HepG2 (cell line): ENCODE measurements at regions of chr10 and their contacts with region 1.

Region 1: DNA sequence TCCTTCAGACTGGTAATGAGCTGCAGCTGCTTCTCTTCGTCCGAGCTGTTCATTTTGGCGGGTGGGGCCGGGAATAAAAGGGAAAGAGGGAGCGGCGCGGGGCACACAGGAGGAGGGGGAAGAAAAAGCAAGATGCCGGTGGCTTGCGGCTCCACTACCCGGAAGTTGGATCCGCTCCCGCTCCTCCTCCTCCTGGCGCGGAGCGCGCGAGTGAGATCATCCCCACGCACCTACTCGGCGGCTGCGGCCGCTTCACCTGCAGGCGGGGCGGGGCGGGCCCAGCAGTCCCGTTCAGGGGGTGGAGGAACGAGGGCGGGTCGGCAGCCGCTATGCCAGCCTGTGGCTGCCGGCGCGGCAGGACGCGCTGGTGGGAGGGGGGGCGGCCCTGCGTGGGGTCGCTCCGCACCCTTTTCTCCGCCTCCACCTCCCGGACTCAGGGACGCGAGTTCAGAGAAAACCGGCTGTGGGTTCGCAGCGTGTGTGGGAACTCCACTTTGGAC is at the start of gene SHTN1:
- DNase-seq: peak; percentile 70
- ATAC-seq: peak; percentile 89
- H3K4me3 ChIP-seq: peak within 1 kb of the TSS; percentile 78 to 86 (median 82)
- H3K27ac ChIP-seq: peak within 1 kb of the TSS; percentile 83
- H3K4me1 ChIP-seq: peaks cover 52% of the 10 kb centered on the region
- H3K27me3 ChIP-seq: no peaks in the 10 kb centered on the region
- CTCF ChIP-seq: no peak
- EP300 ChIP-seq: no peak
- POLR2A ChIP-seq: peak; percentile 57 to 70
- RAD21 ChIP-seq: no peak
- total RNA-seq, gene SHTN1: 15.6 and 18.5 TPM in 2 replicates

Region 2: DNA sequence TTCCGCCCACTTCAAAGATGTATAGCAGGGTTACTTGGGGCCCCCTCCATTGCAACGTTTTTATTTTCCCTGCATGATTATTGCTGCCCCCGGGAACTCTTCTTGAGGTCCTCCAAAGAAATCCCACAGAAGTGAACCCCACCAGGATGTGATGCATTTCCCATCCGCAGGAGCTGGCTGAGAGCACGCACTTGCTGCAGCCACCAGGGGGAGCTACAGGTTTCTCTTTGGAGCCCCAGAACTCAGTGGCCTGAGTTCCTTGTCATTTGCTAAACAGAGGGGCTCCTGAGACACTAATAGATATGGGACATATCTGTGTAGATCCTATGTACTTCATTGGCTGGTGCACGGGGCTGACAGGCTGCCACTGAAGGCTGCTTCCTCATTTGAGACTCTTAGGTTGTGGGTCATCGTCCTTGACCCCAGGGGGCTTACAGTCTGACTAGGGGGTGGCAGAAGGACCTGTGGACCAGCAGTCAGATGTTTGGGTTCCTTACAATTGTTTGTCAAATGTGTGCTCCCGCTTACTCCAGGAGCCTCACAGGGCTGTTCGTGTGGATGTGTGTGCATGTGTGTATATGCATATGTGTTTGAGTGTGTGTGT is 208.1 kb before region 1 on chr10:
- CTCF ChIA-PET with region 1: no interaction called
- POLR2A ChIA-PET with region 1: no interaction called
- in situ Hi-C with region 1: no loop called
- intact Hi-C with region 1: no loop called
- DNase-seq: peak; percentile 60
- ATAC-seq: peak; percentile 96
- H3K4me3 ChIP-seq: no peak overlapping the region
- H3K27ac ChIP-seq: no peak overlapping the region
- H3K4me1 ChIP-seq: no peaks in the 10 kb centered on the region
- H3K27me3 ChIP-seq: peaks cover 0 to 1% of the 10 kb centered on the region in 2 experiments; a peak in 2 of 5 replicates
- CTCF ChIP-seq: peak; percentile 88
- EP300 ChIP-seq: no peak
- POLR2A ChIP-seq: no peak
- RAD21 ChIP-seq: peak; percentile 82

Region 3: GRCh38 chr10:116947842-116948529 is 57.1 kb before region 1 on chr10:
- CTCF ChIA-PET with region 1: no interaction called
- POLR2A ChIA-PET with region 1: interaction called, 5 read pairs
- in situ Hi-C with region 1: no loop called
- intact Hi-C with region 1: loop called (anchors 5 kb)
- DNase-seq: peak; percentile 54
- ATAC-seq: peak; percentile 54; the same call in 2 of the 3 replicates
- H3K4me3 ChIP-seq: no peak overlapping the region
- H3K27ac ChIP-seq: no peak overlapping the region
- H3K4me1 ChIP-seq: peaks cover 18% of the 10 kb centered on the region
- H3K27me3 ChIP-seq: no peaks in the 10 kb centered on the region
- CTCF ChIP-seq: no peak
- EP300 ChIP-seq: no peak
- POLR2A ChIP-seq: no peak
- RAD21 ChIP-seq: no peak

Region 4: DNA sequence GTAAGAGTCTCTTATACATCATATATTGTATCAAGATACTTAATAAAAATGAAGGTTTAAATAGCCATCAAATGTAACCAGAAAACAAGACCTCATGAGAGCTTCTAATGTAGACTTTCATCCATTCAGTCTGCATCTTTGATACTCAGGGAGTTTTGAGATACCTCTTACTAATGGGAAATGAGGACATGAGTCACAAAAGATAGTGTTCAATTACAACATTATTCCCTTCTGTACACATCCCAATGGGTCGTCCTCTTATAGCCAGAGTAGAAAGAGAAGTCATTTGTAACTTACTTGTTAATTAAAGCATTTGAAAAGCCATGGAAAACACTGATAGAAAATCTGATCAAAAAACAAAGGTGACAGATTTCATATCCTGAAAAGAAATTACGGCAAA is 19.5 kb before region 1 on chr10:
- CTCF ChIA-PET with region 1: no interaction called
- POLR2A ChIA-PET with region 1: interaction called, 3 read pairs
- in situ Hi-C with region 1: no loop called
- intact Hi-C with region 1: loop called (anchors 2 kb)
- DNase-seq: no peak
- ATAC-seq: no peak
- H3K4me3 ChIP-seq: no peak overlapping the region
- H3K27ac ChIP-seq: no peak overlapping the region
- H3K4me1 ChIP-seq: peaks cover 47% of the 10 kb centered on the region
- H3K27me3 ChIP-seq: no peaks in the 10 kb centered on the region
- CTCF ChIP-seq: no peak
- EP300 ChIP-seq: no peak
- POLR2A ChIP-seq: no peak
- RAD21 ChIP-seq: no peak

Region 5: DNA sequence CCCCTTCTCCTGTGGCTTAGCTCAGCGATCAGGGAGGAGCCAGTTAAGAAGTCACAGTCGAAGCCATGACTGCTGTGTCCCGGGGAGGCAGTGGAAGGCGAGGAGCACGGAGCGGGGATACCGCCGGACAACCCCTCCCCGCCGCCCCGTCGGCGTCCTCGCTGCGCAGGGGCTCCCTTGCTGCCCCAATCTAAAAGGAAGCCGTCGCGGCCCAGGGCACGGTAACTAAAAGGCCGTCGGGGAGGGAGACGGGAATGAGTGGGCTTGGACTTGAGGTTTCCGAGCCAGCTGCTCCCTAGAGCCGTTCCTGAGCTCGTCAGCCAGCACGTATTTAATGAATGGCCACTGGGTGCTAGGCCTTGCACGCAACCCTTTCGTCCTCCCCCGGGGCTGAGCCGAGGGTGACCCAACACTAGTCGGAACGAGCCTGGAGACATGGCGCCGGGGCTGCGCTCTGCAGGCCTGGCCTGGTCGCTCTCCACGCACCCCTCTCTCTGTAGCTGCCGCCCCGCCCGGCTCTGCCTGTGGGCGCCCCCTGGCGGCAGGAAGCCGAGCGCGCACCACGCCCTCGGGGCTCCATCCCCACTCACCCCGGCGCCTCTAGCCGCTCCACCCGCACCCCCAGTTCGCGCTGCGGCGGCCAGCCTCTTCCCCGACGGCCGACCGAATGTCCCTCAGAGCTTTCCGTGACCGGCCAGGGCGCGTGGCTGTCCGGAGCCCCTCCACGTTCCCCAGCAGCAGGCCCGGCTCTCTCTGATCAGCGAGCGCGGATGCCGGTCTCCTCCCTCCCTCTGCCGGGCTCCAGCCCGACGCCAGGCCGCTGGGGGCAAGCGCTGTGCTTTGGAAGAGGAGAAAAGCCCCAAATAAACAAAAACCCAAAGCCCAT is 163.0 kb after region 1 on chr10:
- CTCF ChIA-PET with region 1: no interaction called
- POLR2A ChIA-PET with region 1: no interaction called
- in situ Hi-C with region 1: loop called (anchors 10 kb)
- intact Hi-C with region 1: loop called (anchors 5 kb)
- DNase-seq: no peak
- ATAC-seq: peak; percentile 93
- H3K4me3 ChIP-seq: peak overlapping the region in 2 of 3 experiments; percentile 19 to 55; a peak in 1 of 6 replicates
- H3K27ac ChIP-seq: no peak overlapping the region
- H3K4me1 ChIP-seq: peaks cover 17% of the 10 kb centered on the region
- H3K27me3 ChIP-seq: peaks cover 5 to 85% of the 10 kb centered on the region in 2 experiments
- CTCF ChIP-seq: peak; percentile 86
- EP300 ChIP-seq: no peak
- POLR2A ChIP-seq: no peak
- RAD21 ChIP-seq: peak; percentile 77